BJ (cell line): ENCODE measurements at regions of chr17 and their contacts with region 1.

Region 1: GRCh38 chr17:3913531-3914311 is 2.5 kb downstream of the P2RX1 start:
- DNase-seq: no peak
- H3K4me3 ChIP-seq: no peak overlapping the region
- H3K27me3 ChIP-seq: no peaks in the 10 kb centered on the region
- CTCF ChIP-seq: peak; percentile 99

Region 2: DNA sequence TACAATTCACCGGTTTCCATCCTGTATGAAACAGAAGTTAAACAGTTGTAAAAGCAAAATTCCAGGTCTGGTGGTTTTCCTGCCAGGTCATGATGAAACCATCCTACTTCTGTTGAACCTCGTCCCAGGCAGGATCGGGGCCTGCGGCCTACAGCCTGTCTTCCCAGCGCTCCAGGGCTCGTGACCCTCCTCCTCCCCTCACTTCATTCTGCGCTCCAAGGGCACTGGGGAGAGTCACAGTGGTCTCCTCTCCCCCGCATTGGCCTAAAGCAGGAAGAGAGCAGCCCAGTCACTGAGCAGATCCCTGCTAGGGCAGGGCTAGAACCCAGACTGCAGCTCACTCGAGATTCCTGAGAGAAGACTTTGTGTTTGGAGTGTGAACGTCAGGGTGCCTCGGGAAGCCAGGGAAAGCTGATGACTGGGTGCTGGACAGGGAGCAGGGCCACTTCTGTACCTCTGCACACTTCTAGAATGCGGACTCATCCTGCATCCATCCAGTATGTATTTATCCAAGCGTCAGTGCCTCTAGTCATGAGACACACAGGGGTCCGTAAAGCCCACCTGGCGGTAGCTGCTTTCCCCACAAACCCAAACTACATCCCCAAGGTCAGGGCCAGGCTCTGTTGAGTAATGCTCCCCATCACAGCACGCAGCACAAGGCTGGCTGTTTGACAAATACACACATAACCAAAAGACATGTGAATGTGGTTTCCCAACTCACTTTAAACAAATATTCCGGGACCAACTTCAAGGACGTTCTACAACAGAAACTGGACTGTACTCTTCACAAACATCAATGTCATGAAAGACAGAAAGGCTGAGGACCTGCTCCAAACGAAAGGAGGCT is 111.0 kb before region 1 on chr17:
- CTCF ChIA-PET with region 1: no interaction called
- POLR2A ChIA-PET with region 1: no interaction called
- DNase-seq: peak; percentile 29
- H3K4me3 ChIP-seq: no peak overlapping the region
- H3K27me3 ChIP-seq: no peaks in the 10 kb centered on the region
- CTCF ChIP-seq: no peak

Region 3: GRCh38 chr17:3893003-3893719 is 20.6 kb before region 1 on chr17 and contains the start of gene CAMKK1:
- CTCF ChIA-PET with region 1: interaction called, 24 read pairs
- POLR2A ChIA-PET with region 1: no interaction called
- DNase-seq: no peak
- H3K4me3 ChIP-seq: peak within 1 kb of the TSS; percentile 54
- H3K27me3 ChIP-seq: no peaks in the 10 kb centered on the region
- CTCF ChIP-seq: no peak
- polyA plus RNA-seq, gene CAMKK1: 4.6 and 6.1 TPM in 2 replicates

Region 4: GRCh38 chr17:3935140-3935542 is 21.4 kb after region 1 on chr17:
- CTCF ChIA-PET with region 1: interaction called, 17 read pairs
- POLR2A ChIA-PET with region 1: no interaction called
- DNase-seq: no peak
- H3K4me3 ChIP-seq: no peak overlapping the region
- H3K27me3 ChIP-seq: no peaks in the 10 kb centered on the region
- CTCF ChIP-seq: peak; percentile 60

Region 5: GRCh38 chr17:4004517-4005295 is 91.0 kb after region 1 on chr17:
- CTCF ChIA-PET with region 1: interaction called, 50 read pairs
- POLR2A ChIA-PET with region 1: no interaction called
- DNase-seq: no peak
- H3K4me3 ChIP-seq: no peak overlapping the region
- H3K27me3 ChIP-seq: no peaks in the 10 kb centered on the region
- CTCF ChIP-seq: peak; percentile 60

Region 6: GRCh38 chr17:4229627-4230541 is 316.2 kb after region 1 on chr17:
- CTCF ChIA-PET with region 1: no interaction called
- POLR2A ChIA-PET with region 1: no interaction called
- DNase-seq: peak; percentile 99
- H3K4me3 ChIP-seq: no peak overlapping the region
- H3K27me3 ChIP-seq: no peaks in the 10 kb centered on the region
- CTCF ChIP-seq: no peak